Gastrocnemius medialis (tissue), 4 donors: ENCODE measurements at regions of chr18 and their contacts with region 1.

Region 1: DNA sequence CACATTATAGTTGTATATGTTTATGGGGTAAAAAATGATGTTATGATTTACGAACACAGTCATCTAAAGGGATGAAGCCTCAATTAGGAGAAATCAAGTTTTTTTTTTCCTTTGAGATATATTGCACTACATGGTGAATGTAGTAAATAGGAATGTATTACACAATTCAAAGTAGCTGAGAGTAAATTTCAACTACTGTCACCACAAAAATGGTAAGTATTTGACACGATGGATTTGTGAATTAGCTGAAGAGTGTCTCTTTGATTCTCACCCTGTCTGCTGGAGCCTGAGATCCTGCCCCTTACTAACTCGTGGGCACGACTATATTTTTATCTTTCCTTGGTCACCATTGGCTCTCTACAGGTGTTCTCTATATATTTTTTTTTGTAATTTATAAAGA is 540.4 kb upstream of the DSEL start:
- DNase-seq: no peak
- ATAC-seq: no peak
- H3K4me3 ChIP-seq: no peak overlapping the region
- H3K27ac ChIP-seq: no peak overlapping the region
- H3K4me1 ChIP-seq: no peaks in the 10 kb centered on the region
- H3K27me3 ChIP-seq: no peaks in the 10 kb centered on the region
- CTCF ChIP-seq: no peak
- POLR2A ChIP-seq: no peak

Region 2: DNA sequence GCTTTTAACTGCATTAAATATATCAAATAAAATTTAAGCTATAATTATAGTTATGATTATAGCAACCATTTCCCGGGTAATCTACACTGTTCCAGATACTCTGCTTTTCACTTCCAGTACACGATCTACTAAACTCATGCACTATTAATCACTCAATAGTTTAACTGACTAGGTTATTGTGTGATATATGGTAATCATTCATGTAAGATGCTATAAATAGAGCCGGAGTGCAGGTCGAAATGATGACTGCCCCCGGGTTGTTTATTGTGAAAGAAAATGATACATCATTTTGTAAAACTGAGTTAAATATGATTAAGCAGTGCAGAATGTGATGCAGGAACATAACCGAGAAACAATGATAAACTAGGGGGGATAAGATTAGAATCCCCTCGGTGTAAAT is 105.8 kb before region 1 on chr18:
- in situ Hi-C with region 1: loop called in 1 of 4 experiments (anchors 25 kb)
- intact Hi-C with region 1: no loop called
- DNase-seq: no peak
- ATAC-seq: no peak
- H3K4me3 ChIP-seq: no peak overlapping the region
- H3K27ac ChIP-seq: no peak overlapping the region
- H3K4me1 ChIP-seq: no peaks in the 10 kb centered on the region
- H3K27me3 ChIP-seq: no peaks in the 10 kb centered on the region
- CTCF ChIP-seq: no peak
- POLR2A ChIP-seq: no peak

Region 3: DNA sequence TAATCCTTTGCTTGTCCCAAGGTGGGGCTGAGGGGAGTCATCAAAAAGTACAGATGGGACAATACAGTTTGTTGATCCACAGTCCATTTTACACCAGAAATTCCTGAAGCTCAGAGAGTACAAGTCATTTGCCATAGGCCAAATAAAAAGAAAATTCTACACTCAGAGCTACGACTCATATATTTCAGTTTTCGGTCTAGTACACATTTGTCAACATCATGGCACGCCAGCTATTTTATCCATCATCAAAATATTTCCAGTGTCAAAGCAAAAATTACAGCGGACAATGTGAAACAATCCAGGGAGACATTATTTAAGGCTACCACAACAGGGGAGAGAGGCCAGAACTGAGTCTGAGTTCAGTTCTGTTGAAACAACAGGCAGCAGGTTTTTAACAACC is 47.1 kb after region 1 on chr18:
- in situ Hi-C with region 1: no loop called
- intact Hi-C with region 1: no loop called
- DNase-seq: no peak
- ATAC-seq: no peak
- H3K4me3 ChIP-seq: no peak overlapping the region
- H3K27ac ChIP-seq: no peak overlapping the region
- H3K4me1 ChIP-seq: no peaks in the 10 kb centered on the region
- H3K27me3 ChIP-seq: no peaks in the 10 kb centered on the region
- CTCF ChIP-seq: no peak
- POLR2A ChIP-seq: no peak

Region 4: DNA sequence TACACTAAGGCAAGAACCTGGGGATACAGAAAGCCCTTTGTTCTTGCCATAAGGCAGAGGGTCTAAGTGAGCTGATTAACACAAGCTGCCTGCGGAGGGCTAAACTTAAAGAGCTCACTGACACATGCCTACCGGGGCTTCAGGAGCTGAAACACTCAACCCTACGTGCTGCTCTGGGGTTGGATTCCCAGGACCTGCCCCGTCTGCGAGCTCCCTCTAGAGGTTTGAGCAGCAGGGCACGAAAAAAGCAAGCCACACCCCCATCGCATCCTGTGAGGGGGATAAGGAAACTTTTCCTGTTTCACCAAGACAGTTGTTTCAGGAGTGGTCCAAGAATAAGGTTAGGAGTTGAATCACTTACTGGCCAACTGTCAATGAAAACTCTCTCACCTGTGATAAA is 95.8 kb after region 1 on chr18:
- in situ Hi-C with region 1: loop called in 1 of 4 experiments (anchors 25 kb)
- intact Hi-C with region 1: no loop called
- DNase-seq: no peak
- ATAC-seq: no peak
- H3K4me3 ChIP-seq: no peak overlapping the region
- H3K27ac ChIP-seq: no peak overlapping the region
- H3K4me1 ChIP-seq: no peaks in the 10 kb centered on the region
- H3K27me3 ChIP-seq: no peaks in the 10 kb centered on the region
- CTCF ChIP-seq: no peak
- POLR2A ChIP-seq: no peak

Region 5: DNA sequence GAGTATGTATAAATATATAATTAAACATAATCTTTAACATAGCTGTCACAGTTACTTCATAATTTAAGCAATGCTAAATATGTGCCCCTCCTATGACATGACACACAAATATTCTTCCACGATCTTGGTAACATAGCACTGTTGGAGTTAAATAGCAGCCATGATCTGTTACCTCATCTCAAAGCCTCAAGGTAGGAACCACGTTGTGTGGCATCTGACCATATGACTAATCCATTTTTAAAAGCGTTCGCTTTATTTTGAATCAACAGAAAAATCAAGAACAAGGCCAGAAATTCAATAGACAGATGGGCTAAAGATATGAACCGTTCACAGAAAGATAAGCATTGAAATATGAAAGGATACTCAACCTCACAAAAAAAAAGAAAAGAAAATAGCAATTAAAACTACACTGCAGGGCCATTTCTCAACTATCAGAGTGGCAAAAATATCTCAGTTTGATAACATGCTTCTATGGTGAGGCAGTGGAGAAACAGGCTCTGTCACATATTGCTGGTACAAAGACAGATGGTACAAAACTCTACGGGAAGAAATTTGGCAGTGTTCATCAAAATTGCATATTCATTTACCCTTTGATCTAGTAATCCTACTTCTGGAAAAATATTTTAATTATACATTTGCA is 552.0 kb after region 1 on chr18:
- in situ Hi-C with region 1: no loop called
- intact Hi-C with region 1: no loop called
- DNase-seq: no peak
- ATAC-seq: no peak
- H3K4me3 ChIP-seq: no peak overlapping the region
- H3K27ac ChIP-seq: no peak overlapping the region
- H3K4me1 ChIP-seq: no peaks in the 10 kb centered on the region
- H3K27me3 ChIP-seq: no peaks in the 10 kb centered on the region
- CTCF ChIP-seq: no peak
- POLR2A ChIP-seq: no peak